Activated CD8-positive, alpha-beta T cell treated with anti-CD3 and anti-CD28 coated beads for 36 hours (primary cell): ENCODE measurements at regions of chr9 and their contacts with region 1.

Region 1: GRCh38 chr9:114681594-114682332 is at the start of gene TEX48:
- DNase-seq: peak; percentile 92
- ATAC-seq: peak; percentile 90
- H3K4me3 Mint-ChIP-seq: no peak within 1 kb of the TSS
- H3K27ac Mint-ChIP-seq: peak within 1 kb of the TSS; percentile 89
- H3K4me1 Mint-ChIP-seq: peaks cover 69% of the 10 kb centered on the region
- H3K27me3 Mint-ChIP-seq: peaks cover 11% of the 10 kb centered on the region
- CTCF ChIP-seq: peak; percentile 81
- total RNA-seq, gene TEX48: 0.65 TPM in 1 of 2 experiments, not detected in the other

Region 2: DNA sequence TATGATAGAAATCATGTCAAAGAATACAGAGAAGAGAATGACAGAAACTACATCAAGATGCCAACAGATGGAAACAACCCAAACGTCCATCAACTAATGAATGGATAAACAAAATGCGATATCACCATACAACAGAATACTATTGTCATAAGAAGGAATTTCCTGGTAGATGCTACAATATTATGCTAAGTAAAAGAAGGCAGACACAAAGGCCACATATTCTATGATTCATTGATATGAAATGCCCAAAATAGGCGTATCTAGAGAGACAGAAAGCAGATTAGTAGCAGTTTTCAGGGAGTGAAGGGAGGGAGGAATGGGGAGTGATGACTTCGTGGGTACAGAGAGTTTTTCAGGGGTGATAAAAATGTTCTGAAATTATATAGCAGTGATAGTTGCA is 235.7 kb before region 1 on chr9:
- CTCF ChIA-PET with region 1: no interaction called
- POLR2A ChIA-PET with region 1: no interaction called
- intact Hi-C with region 1: no loop called
- DNase-seq: no peak
- ATAC-seq: no peak
- H3K4me3 Mint-ChIP-seq: no peak overlapping the region
- H3K27ac Mint-ChIP-seq: no peak overlapping the region
- H3K4me1 Mint-ChIP-seq: peaks cover under 1% of the 10 kb centered on the region
- H3K27me3 Mint-ChIP-seq: no peaks in the 10 kb centered on the region
- CTCF ChIP-seq: no peak

Region 3: GRCh38 chr9:114662081-114662989 is 19.4 kb before region 1 on chr9:
- CTCF ChIA-PET with region 1: interaction called, 24 read pairs
- POLR2A ChIA-PET with region 1: no interaction called
- intact Hi-C with region 1: no loop called
- DNase-seq: peak; percentile 79
- ATAC-seq: peak; percentile 97
- H3K4me3 Mint-ChIP-seq: no peak overlapping the region
- H3K27ac Mint-ChIP-seq: no peak overlapping the region
- H3K4me1 Mint-ChIP-seq: peaks cover 19% of the 10 kb centered on the region
- H3K27me3 Mint-ChIP-seq: peaks cover 6% of the 10 kb centered on the region
- CTCF ChIP-seq: peak; percentile 94

Region 4: DNA sequence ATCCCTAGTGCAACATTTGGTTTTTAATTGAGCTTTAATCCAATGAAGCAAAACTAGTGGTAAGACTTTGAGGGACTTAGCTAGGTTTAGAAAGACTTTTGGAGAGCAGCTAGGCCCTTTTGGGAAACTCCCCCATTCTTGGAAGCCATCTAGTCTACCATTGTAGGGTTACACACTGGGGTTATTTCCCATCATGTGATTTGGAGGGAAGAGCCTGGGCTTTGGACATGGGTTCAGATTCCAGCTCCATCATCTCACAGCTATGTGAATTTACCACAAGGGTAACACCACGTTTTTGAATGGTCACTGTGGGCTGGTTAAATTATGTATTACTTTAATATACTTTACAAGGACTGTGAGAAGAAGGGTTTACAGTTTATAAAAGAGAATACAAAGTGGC is 142.3 kb after region 1 on chr9:
- CTCF ChIA-PET with region 1: interaction called, 18 read pairs
- POLR2A ChIA-PET with region 1: no interaction called
- intact Hi-C with region 1: no loop called
- DNase-seq: no peak
- ATAC-seq: no peak
- H3K4me3 Mint-ChIP-seq: no peak overlapping the region
- H3K27ac Mint-ChIP-seq: no peak overlapping the region
- H3K4me1 Mint-ChIP-seq: peaks cover 36% of the 10 kb centered on the region
- H3K27me3 Mint-ChIP-seq: no peaks in the 10 kb centered on the region
- CTCF ChIP-seq: no peak

Region 5: GRCh38 chr9:114914139-114914538 is 232.4 kb after region 1 on chr9:
- CTCF ChIA-PET with region 1: interaction called, 188 read pairs
- POLR2A ChIA-PET with region 1: interaction called, 4 read pairs
- intact Hi-C with region 1: no loop called
- DNase-seq: no peak
- ATAC-seq: no peak
- H3K4me3 Mint-ChIP-seq: no peak overlapping the region
- H3K27ac Mint-ChIP-seq: peak overlapping the region; percentile 60
- H3K4me1 Mint-ChIP-seq: peaks cover 73% of the 10 kb centered on the region
- H3K27me3 Mint-ChIP-seq: no peaks in the 10 kb centered on the region
- CTCF ChIP-seq: no peak

Region 6: GRCh38 chr9:115008536-115009270 is 326.9 kb after region 1 on chr9:
- CTCF ChIA-PET with region 1: interaction called, 42 read pairs
- POLR2A ChIA-PET with region 1: interaction called, 5 read pairs
- intact Hi-C with region 1: no loop called
- DNase-seq: peak; percentile 38
- ATAC-seq: peak; percentile 48
- H3K4me3 Mint-ChIP-seq: no peak overlapping the region
- H3K27ac Mint-ChIP-seq: no peak overlapping the region
- H3K4me1 Mint-ChIP-seq: peaks cover 63% of the 10 kb centered on the region
- H3K27me3 Mint-ChIP-seq: no peaks in the 10 kb centered on the region
- CTCF ChIP-seq: no peak